ENCODE measurements at regions of chr3 and their contacts with region 1.

Region 1: GRCh38 chr3:12868039-12869034 is 27.0 kb upstream of the RPL32 start:
- DNase-seq: peak; percentile 79
- CTCF ChIP-seq: peak; percentile 95

Region 2: GRCh38 chr3:12308517-12308916 is 559.8 kb before region 1 on chr3:
- CTCF ChIA-PET with region 1: no interaction called
- POLR2A ChIA-PET with region 1: no interaction called
- DNase-seq: no peak
- CTCF ChIP-seq: no peak

Region 3: DNA sequence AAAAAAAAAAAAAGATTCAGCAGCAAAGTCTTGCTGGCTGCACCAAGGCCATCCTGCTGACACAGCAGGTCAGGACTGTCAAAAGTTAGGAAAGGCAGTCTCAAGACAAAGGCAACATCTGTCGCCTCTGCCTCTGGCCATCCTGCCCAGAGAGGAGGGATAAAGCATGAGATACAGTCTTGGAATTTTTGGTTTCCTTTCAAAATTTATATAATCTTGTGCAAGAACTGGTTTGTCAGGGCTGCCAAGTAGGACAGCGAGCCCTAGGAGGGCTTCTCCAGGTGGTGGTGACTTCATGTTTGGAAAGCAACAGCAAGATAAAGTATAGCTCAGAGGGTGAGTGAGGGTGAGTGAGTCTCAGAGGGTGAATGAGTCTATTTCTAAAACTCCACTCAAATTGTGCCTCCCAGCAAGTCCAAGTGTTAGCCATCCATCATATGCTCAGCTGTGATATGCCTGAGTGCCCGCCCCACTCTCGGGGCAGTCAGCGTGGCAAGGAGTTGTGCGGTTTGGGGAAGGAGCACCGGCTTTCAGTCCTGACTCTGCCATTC is 15.1 kb before region 1 on chr3:
- CTCF ChIA-PET with region 1: interaction called, 13 read pairs
- POLR2A ChIA-PET with region 1: no interaction called
- DNase-seq: no peak
- CTCF ChIP-seq: no peak

Region 4: GRCh38 chr3:12884186-12884680 is 15.9 kb after region 1 on chr3:
- CTCF ChIA-PET with region 1: interaction called, 35 read pairs
- POLR2A ChIA-PET with region 1: no interaction called
- DNase-seq: no peak
- CTCF ChIP-seq: no peak

Measured in GM10248 (cell line).